Activated CD4-positive, alpha-beta T cell treated with anti-CD3 and anti-CD28 coated beads, Interleukin-2, amount 10 ng/mL, durations not matched to agents 24 days and 14 days (primary cell): ENCODE measurements at regions of chr5 and their contacts with region 1.

Region 1: GRCh38 chr5:95646554-95647431 is at the start of gene RFESD:
- DNase-seq: peak; percentile 99
- H3K4me3 Mint-ChIP-seq: peak within 1 kb of the TSS; percentile 83
- H3K27ac Mint-ChIP-seq: peak within 1 kb of the TSS; percentile 89
- H3K4me1 Mint-ChIP-seq: peaks cover 29% of the 10 kb centered on the region
- H3K27me3 Mint-ChIP-seq: no peaks in the 10 kb centered on the region
- total RNA-seq, gene RFESD: 4.0 and 4.2 TPM in 2 replicates

Region 2: DNA sequence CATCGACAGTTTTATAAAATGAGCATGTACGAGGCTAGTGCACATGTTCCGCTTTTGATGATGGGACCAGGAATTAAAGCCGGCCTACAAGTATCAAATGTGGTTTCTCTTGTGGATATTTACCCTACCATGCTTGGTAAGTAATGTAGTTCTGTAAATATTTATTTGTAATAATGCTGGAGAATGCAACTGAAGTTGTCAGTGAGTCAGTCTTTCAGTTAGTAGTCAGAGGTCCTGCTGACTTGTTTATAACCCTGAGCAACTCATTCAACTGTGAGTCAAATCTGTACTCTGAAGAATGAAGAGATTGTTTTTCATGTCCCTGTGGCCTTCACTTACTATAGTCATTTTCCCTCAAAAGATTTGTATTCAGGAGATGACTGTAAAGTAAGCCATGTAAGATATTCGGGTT is 55.3 kb before region 1 on chr5:
- intact Hi-C with region 1: loop called (anchors 1 kb)
- DNase-seq: no peak
- H3K4me3 Mint-ChIP-seq: no peak overlapping the region
- H3K27ac Mint-ChIP-seq: peak overlapping the region; percentile 39
- H3K4me1 Mint-ChIP-seq: peaks cover 20% of the 10 kb centered on the region
- H3K27me3 Mint-ChIP-seq: no peaks in the 10 kb centered on the region

Region 3: GRCh38 chr5:95718203-95718602 is 71.4 kb after region 1 on chr5:
- intact Hi-C with region 1: loop called (anchors 2 kb)
- DNase-seq: peak; percentile 78
- H3K4me3 Mint-ChIP-seq: no peak overlapping the region
- H3K27ac Mint-ChIP-seq: no peak overlapping the region
- H3K4me1 Mint-ChIP-seq: peaks cover 22% of the 10 kb centered on the region
- H3K27me3 Mint-ChIP-seq: peaks cover 29% of the 10 kb centered on the region

Region 4: GRCh38 chr5:95822542-95823181 is 175.9 kb after region 1 on chr5 and contains the start of gene GLRX:
- intact Hi-C with region 1: loop called (anchors 1 kb)
- DNase-seq: peak; percentile 91
- H3K4me3 Mint-ChIP-seq: peak within 1 kb of the TSS; percentile 91
- H3K27ac Mint-ChIP-seq: peak within 1 kb of the TSS; percentile 86
- H3K4me1 Mint-ChIP-seq: peaks cover 64% of the 10 kb centered on the region
- H3K27me3 Mint-ChIP-seq: no peaks in the 10 kb centered on the region
- total RNA-seq, gene GLRX: 13.5 and 17.3 TPM in 2 replicates

Region 5: DNA sequence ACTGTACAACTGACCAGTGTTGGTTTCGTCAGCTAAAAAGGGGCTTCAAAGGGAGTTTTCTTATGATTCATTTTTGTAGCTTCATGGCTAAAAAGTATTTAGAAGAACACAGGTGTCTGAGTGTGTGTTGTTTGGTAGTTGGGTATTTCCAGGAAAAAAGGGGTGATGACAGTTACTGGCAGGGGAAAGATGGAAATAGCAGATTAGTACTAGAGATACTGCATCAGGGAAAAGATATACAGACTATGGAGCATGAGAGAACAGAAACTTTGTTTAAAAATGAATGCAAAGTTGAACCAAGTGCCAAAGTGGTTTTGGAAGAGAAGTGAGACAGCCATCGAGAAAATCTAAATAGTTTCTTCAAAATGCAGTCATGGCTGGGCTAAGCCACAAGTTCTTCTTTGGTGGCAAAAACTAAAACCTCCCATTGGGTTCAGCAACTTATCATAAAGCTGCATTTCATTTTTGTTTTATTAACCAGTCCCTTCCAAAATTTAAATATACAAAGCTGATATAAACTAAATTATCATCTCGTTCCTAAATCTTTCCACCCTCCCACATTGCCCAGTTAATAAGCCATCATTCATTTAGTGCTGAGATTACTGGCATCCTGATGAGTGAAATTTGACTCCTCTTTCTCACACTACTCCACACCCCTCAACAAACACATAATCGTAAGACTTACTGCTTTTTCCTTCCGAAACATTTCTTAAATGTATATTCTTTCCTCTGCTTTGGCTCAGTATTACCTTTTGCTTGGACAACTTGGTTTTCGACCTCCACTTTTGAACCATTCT is 281.3 kb after region 1 on chr5:
- intact Hi-C with region 1: loop called (anchors 5 kb)
- DNase-seq: peak; percentile 61
- H3K4me3 Mint-ChIP-seq: peak overlapping the region; percentile 48
- H3K27ac Mint-ChIP-seq: peak overlapping the region; percentile 82
- H3K4me1 Mint-ChIP-seq: peaks cover 58% of the 10 kb centered on the region
- H3K27me3 Mint-ChIP-seq: no peaks in the 10 kb centered on the region

Region 6: GRCh38 chr5:96536991-96537785 is 890.4 kb after region 1 on chr5:
- intact Hi-C with region 1: loop called (anchors 5 kb)
- DNase-seq: peak; percentile 83
- H3K4me3 Mint-ChIP-seq: peak overlapping the region; percentile 56
- H3K27ac Mint-ChIP-seq: peak overlapping the region; percentile 85
- H3K4me1 Mint-ChIP-seq: peaks cover 27% of the 10 kb centered on the region
- H3K27me3 Mint-ChIP-seq: peaks cover 7% of the 10 kb centered on the region

Region 7: GRCh38 chr5:96562614-96563013 is 915.8 kb after region 1 on chr5:
- intact Hi-C with region 1: no loop called
- DNase-seq: no peak
- H3K4me3 Mint-ChIP-seq: no peak overlapping the region
- H3K27ac Mint-ChIP-seq: no peak overlapping the region
- H3K4me1 Mint-ChIP-seq: peaks cover 14% of the 10 kb centered on the region
- H3K27me3 Mint-ChIP-seq: peaks cover 6% of the 10 kb centered on the region